GM13977 (cell line): ENCODE measurements at regions of chr1 and their contacts with region 1.

Region 1: DNA sequence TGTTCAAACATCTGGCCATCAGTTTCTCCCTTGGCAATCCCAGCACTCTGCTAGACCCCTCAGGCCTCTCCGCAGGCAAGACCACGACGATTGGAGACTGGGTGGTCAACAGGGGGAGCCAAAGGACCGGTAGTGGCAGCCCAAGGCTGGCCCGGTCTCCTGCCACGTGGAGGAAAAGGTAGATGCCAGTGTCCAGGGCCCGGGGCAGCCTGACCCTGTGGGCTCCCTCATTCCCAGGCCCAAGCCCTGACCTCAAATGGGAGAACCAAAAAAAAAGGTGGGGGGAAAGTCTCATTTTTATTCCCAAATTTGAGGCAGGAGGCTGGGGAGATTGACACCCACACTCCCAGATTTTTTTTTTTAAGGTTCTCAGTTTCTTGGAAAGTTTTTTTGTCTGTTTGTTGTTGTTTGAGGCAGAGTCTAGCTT is 24.8 kb downstream of the S100A6 start:
- DNase-seq: peak; percentile 86
- CTCF ChIP-seq: peak; percentile 95

Region 2: GRCh38 chr1:153568367-153569099 is 57.5 kb after region 1 on chr1:
- in situ Hi-C with region 1: loop called (anchors 10 kb)
- DNase-seq: peak; percentile 86
- CTCF ChIP-seq: peak; percentile 98

Region 3: GRCh38 chr1:153827168-153827964 is 316.4 kb after region 1 on chr1:
- in situ Hi-C with region 1: no loop called
- DNase-seq: peak; percentile 27
- CTCF ChIP-seq: no peak

Region 4: GRCh38 chr1:153990468-153991150 is 479.6 kb after region 1 on chr1 and contains the start of gene RPS27:
- in situ Hi-C with region 1: loop called (anchors 25 kb)
- DNase-seq: peak; percentile 95
- CTCF ChIP-seq: no peak